ENCODE measurements at regions of chr12 and their contacts with region 1.

Region 1: DNA sequence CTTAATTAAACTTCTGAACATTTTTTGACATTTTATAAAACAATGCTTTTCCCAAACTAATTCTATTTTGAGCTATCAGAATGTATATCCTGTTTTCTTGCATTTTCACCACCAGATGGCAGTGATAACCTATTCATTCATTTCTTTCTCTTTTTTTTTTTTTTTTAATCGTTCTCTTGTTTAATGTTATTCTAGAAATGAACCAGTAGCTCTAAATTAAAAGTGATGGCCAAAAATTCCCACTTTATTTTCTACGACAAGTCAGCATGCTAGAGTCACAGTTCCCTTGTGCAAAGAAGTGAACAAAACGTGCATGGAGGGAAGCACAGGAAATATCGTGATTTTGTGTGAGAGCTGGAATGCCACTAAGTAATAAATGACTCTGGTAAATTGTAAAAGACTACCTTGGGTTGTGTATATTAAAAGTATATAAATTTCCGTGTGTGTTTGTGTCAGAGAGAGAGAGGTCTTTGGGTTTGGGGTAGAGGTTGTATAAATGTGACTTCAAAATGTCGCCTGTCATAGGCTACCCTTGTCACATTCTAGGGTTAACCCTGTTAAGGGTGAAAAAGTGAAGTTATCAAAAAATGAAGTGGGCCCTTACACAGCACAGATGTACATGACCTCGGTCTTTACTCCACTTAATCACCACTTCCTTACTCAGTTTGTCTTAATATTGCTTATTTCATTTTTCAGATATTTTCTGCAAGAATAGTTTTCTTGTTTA is 40.4 kb upstream of the LDHB start:
- DNase-seq: no peak
- ATAC-seq: peak; percentile 60
- H3K4me3 ChIP-seq: peak overlapping the region; percentile 47 to 72
- H3K27ac ChIP-seq: no peak overlapping the region
- H3K4me1 ChIP-seq: peaks cover 0 to 2% of the 10 kb centered on the region in 2 donors
- H3K27me3 ChIP-seq: no peaks in the 10 kb centered on the region

Region 2: GRCh38 chr12:21828779-21829178 is 130.7 kb after region 1 on chr12:
- intact Hi-C with region 1: loop called in 1 of 2 experiments (anchors 5 kb)
- DNase-seq: no peak
- ATAC-seq: no peak
- H3K4me3 ChIP-seq: peak overlapping the region in 1 of 2 donors; percentile 34
- H3K27ac ChIP-seq: no peak overlapping the region
- H3K4me1 ChIP-seq: peaks cover 5 to 8% of the 10 kb centered on the region in 2 donors
- H3K27me3 ChIP-seq: no peaks in the 10 kb centered on the region

Region 3: GRCh38 chr12:21940549-21941505 is 242.8 kb after region 1 on chr12 and contains the start of gene ABCC9:
- intact Hi-C with region 1: loop called in 1 of 2 experiments (anchors 5 kb)
- DNase-seq: peak; percentile 65 to 86
- ATAC-seq: peak; percentile 90
- H3K4me3 ChIP-seq: peak within 1 kb of the TSS; percentile 43 to 76
- H3K27ac ChIP-seq: peak within 1 kb of the TSS; percentile 7 to 46
- H3K4me1 ChIP-seq: no peaks in the 10 kb centered on the region
- H3K27me3 ChIP-seq: no peaks in the 10 kb centered on the region
- total RNA-seq, gene ABCC9: 47.9 to 157 TPM

Region 4: GRCh38 chr12:21989819-21990412 is 291.8 kb after region 1 on chr12:
- intact Hi-C with region 1: loop called (anchors 2 kb)
- DNase-seq: no peak
- ATAC-seq: peak; percentile 62
- H3K4me3 ChIP-seq: no peak overlapping the region
- H3K27ac ChIP-seq: no peak overlapping the region
- H3K4me1 ChIP-seq: no peaks in the 10 kb centered on the region
- H3K27me3 ChIP-seq: no peaks in the 10 kb centered on the region

Region 5: DNA sequence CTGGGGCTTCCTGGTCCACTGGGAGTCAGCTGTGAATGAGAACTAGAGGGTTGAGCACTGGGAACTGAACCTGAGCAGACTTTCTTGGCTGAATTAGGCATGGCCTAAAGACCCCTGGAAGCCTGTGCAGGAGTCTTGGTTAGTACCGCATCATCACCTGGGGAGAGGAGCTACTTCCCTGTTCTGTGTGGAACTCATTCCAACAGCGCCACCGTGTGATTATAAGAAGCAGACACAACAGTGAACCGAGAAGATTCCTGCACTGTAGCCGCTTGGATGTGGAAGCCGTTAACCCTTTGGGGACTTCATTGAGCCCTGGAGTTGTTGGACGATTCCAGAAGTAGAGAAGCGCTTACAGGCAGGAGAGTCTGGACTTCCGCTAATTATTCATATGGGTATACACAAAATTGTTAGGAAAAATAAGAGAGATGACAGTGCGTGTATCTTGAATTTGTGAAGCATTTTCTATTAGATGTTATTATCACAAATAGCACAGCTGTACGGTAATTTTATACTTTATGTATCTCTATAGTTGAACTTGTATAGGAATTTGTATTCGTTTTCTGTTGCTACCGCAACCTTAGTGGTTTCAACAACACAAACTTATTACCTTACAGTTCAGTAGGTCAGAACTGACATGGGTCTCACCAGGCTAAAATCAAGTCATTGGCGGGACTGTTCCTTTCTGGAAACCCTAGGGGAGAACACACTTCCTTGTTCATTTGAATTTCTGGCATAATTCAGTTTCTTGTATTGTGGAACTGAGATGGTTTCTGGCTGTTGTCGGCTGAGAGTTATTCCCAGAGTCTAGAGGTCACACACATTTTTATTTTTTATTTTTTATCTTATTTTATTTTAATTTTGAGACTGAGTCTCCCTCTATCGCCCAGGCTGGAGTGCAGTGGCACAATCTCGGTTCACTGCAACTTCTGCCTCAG is 745.6 kb after region 1 on chr12:
- intact Hi-C with region 1: loop called in 1 of 2 experiments (anchors 10 kb)
- DNase-seq: peak; percentile 51 to 55
- ATAC-seq: peak; percentile 89
- H3K4me3 ChIP-seq: no peak overlapping the region
- H3K27ac ChIP-seq: no peak overlapping the region
- H3K4me1 ChIP-seq: no peaks in the 10 kb centered on the region
- H3K27me3 ChIP-seq: no peaks in the 10 kb centered on the region

Measured in aorta (tissue), 5 donors.